K562 (cell line): ENCODE measurements at regions of chr16 and their contacts with region 1.

Region 1: DNA sequence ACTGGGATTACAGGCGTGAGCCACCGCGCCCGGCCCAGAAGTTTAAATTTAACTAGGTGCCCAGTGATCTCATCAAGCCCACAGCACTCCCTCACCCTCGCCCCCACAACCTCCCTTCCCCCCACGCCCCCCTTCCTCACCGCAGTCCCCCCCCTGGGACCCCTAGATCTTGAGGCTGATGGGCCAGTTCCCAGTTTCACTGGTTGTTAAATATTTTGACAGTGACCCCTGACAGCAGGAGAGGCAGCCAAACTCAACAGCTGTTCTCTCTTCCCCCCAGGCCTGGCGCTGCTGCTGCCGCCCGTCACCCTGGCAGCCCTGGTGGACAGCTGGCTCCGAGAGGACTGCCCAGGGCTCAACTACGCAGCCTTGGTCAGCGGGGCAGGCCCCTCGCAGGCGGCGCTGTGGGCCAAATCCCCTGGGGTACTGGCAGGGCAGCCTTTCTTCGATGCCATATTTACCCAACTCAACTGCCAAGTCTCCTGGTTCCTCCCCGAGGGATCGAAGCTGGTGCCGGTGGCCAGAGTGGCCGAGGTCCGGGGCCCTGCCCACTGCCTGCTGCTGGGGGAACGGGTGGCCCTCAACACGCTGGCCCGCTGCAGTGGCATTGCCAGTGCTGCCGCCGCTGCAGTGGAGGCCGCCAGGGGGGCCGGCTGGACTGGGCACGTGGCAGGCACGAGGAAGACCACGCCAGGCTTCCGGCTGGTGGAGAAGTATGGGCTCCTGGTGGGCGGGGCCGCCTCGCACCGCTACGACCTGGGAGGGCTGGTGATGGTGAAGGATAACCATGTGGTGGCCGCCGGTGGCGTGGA is 15.6 kb downstream of the QPRT start:
- DNase-seq: no peak
- ATAC-seq: no peak
- H3K4me3 ChIP-seq: no peak overlapping the region
- H3K27ac ChIP-seq: no peak overlapping the region
- H3K4me1 ChIP-seq: peaks cover 23 to 36% of the 10 kb centered on the region in 2 experiments
- H3K27me3 ChIP-seq: no peaks in the 10 kb centered on the region
- CTCF ChIP-seq: no peak
- EP300 ChIP-seq: no peak
- POLR2A ChIP-seq: no peak
- RAD21 ChIP-seq: no peak

Region 2: DNA sequence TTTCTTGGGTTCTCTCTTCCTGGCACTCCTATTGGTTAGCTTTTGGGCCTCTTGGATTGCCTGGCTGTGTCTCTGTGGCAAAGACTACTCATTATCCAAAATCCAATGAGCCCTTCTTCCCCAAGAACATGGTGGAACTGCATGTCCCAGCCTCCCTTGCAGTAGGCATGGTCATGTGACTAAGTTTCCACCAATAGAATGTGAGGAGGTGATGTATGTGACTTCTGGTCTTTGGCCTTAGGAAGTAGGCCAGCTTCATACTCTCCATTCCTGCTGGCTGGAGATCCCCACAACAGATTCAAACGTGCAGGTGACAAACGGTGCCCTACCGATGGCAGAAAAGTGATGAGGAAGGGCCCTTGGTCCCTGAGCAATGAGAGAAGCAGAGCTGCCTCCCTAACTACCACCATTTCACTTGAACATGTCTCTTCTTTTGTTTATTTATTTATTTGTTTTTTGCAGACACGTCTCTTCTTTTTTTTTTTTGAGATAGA is 48.8 kb before region 1 on chr16:
- CTCF ChIA-PET with region 1: no interaction called
- POLR2A ChIA-PET with region 1: no interaction called
- in situ Hi-C with region 1: no loop called
- intact Hi-C with region 1: loop called (anchors 5 kb)
- DNase-seq: peak; percentile 79 to 87 (median 87)
- ATAC-seq: peak; percentile 94
- H3K4me3 ChIP-seq: no peak overlapping the region
- H3K27ac ChIP-seq: peak overlapping the region; percentile 66
- H3K4me1 ChIP-seq: peaks cover 29 to 35% of the 10 kb centered on the region in 2 experiments
- H3K27me3 ChIP-seq: no peaks in the 10 kb centered on the region
- CTCF ChIP-seq: no peak
- EP300 ChIP-seq: no peak
- POLR2A ChIP-seq: no peak
- RAD21 ChIP-seq: no peak

Region 3: GRCh38 chr16:29664091-29664921 is 30.3 kb before region 1 on chr16:
- CTCF ChIA-PET with region 1: interaction called, 7 read pairs
- POLR2A ChIA-PET with region 1: interaction called, 4 read pairs
- in situ Hi-C with region 1: no loop called
- intact Hi-C with region 1: loop called (anchors 5 kb)
- DNase-seq: peak; percentile 74 to 84 (median 80)
- ATAC-seq: peak; percentile 33
- H3K4me3 ChIP-seq: peak overlapping the region; percentile 60
- H3K27ac ChIP-seq: peak overlapping the region; percentile 93
- H3K4me1 ChIP-seq: peaks cover 31 to 52% of the 10 kb centered on the region in 2 experiments
- H3K27me3 ChIP-seq: no peaks in the 10 kb centered on the region
- CTCF ChIP-seq: peak in 2 of 3 experiments; percentile 31 to 40; a peak in 3 of 6 replicates
- EP300 ChIP-seq: no peak
- POLR2A ChIP-seq: no peak
- RAD21 ChIP-seq: no peak

Region 4: GRCh38 chr16:29678691-29679267 is 15.8 kb before region 1 on chr16 and contains the start of gene QPRT:
- CTCF ChIA-PET with region 1: no interaction called
- POLR2A ChIA-PET with region 1: interaction called, 30 read pairs
- in situ Hi-C with region 1: no loop called
- intact Hi-C with region 1: loop called (anchors 1 kb)
- DNase-seq: peak; percentile 86 to 93 (median 90)
- ATAC-seq: peak; percentile 91
- H3K4me3 ChIP-seq: peak within 1 kb of the TSS; percentile 62
- H3K27ac ChIP-seq: peak within 1 kb of the TSS; percentile 82
- H3K4me1 ChIP-seq: peaks cover 23 to 57% of the 10 kb centered on the region in 2 experiments
- H3K27me3 ChIP-seq: no peaks in the 10 kb centered on the region
- CTCF ChIP-seq: no peak
- EP300 ChIP-seq: no peak
- POLR2A ChIP-seq: peak; percentile 69
- RAD21 ChIP-seq: no peak
- polyA plus RNA-seq, gene QPRT: 7.7 to 10.8 TPM

Region 5: GRCh38 chr16:30028438-30029076 is 334.0 kb after region 1 on chr16:
- CTCF ChIA-PET with region 1: no interaction called
- POLR2A ChIA-PET with region 1: no interaction called
- in situ Hi-C with region 1: loop called (anchors 10 kb)
- intact Hi-C with region 1: no loop called
- DNase-seq: peak; percentile 55 to 82 (median 68)
- ATAC-seq: peak; percentile 82
- H3K4me3 ChIP-seq: no peak overlapping the region
- H3K27ac ChIP-seq: no peak overlapping the region
- H3K4me1 ChIP-seq: peaks cover 0 to 31% of the 10 kb centered on the region in 2 experiments; a peak in 2 of 5 replicates
- H3K27me3 ChIP-seq: peaks cover 17 to 72% of the 10 kb centered on the region in 2 experiments; a peak in 4 of 5 replicates
- CTCF ChIP-seq: no peak
- EP300 ChIP-seq: no peak
- POLR2A ChIP-seq: no peak
- RAD21 ChIP-seq: no peak